Dorsolateral prefrontal cortex (tissue), 120 donors: ENCODE measurements at regions of chr17 and their contacts with region 1.

Region 1: DNA sequence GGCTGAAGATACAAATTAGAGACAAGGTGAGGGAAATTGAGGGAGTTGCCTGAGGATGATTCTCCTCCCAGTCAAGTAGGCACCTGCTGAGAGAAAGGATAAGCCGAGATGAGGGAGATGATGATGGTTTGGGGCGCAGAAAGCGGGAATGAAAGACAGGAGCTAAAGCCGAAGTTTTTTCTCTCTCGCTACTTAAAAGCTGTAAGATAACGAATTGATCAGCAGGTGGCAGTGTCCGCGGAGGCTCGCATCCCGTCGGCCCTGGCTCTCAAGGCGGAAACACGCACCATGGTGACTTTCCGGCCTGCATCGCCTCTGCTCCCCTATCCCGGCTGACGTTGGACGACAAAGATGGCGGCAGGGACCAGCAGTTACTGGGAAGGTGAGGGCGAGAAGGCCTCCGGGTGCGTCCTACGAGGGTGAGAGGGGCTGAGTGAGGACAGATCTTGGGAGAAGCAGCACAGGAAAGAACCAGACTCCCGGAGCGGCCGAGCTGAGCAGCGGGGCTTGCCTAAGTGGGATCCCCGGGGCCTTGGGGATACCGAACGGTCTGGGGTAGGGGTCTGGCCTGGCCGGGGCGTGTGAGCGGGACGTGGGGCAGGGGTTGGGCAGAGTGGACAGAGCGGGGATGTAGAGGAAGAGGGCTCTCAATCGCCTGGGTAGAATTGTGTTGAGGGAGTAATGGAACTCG is at the start of gene GOSR1:
- DNase-seq: peak; percentile 87 to 97 (median 95)
- H3K4me3 ChIP-seq: peak within 1 kb of the TSS; percentile 66 to 98 (median 89)
- H3K27ac ChIP-seq: peak within 1 kb of the TSS; percentile 64 to 98 (median 91)
- H3K27me3 ChIP-seq: no peaks in the 10 kb centered on the region
- CTCF ChIP-seq: peak; percentile 81 to 95 (median 90)
- total RNA-seq, gene GOSR1: 41.4 to 68.9 (median 57.7) TPM

Region 2: GRCh38 chr17:30104575-30105339 is 372.5 kb before region 1 on chr17:
- intact Hi-C with region 1: loop called in 1 of 2 experiments (anchors 10 kb)
- DNase-seq: peak; percentile 57 to 82 (median 74)
- H3K4me3 ChIP-seq: peak overlapping the region; percentile 19 to 75 (median 57)
- H3K27ac ChIP-seq: peak overlapping the region in 29 of 59 donors; percentile 0 to 80 (median 48)
- H3K27me3 ChIP-seq: no peaks in the 10 kb centered on the region
- CTCF ChIP-seq: peak in 55 of 56 donors; percentile 78 to 97 (median 89)

Region 3: DNA sequence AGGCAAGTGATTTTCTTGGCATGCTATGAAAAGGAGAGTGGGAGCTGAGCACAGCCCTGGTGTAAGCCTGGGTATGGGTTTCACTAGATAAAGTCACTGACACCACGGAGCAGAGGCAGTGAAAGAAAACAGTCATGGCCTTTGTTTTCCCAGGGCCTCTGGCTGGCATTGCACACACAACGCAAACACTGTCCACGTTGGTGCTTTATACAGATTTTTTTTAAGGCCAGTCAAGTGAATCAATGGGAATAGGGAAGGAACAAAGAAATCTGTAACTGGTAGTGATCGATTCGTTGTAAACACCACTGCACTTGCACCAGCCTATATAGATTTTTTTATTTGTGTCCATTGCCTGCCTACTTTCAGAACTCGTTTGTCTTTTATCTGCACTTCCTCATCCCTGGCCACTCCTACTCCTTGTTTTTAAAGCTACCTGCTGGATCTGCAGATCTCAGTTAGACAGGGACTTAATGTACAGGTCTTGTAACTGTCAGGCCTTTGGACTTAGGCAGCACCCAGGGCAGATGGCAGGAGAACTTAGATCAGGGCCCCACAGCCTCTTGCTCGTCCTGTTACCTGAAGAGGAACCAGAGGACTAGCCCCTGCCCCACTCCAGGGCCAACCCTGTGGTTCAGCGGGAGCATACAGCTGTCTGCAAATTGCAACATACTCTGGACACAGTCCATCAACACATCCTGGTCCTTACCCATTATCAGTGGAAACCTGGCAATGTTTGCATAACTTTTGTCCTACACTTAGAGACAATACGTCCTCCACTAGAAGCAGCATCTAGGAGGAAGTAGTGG is 132.7 kb before region 1 on chr17:
- intact Hi-C with region 1: loop called (anchors 1 to 2 kb)
- DNase-seq: peak in 9 of 10 donors; percentile 26 to 80 (median 56)
- H3K4me3 ChIP-seq: peak overlapping the region in 22 of 59 donors; percentile 7 to 38 (median 16)
- H3K27ac ChIP-seq: peak overlapping the region; percentile 21 to 98 (median 92)
- H3K27me3 ChIP-seq: no peaks in the 10 kb centered on the region
- CTCF ChIP-seq: peak in 13 of 56 donors; percentile 4 to 39 (median 17)

Region 4: GRCh38 chr17:30368912-30369720 is 108.1 kb before region 1 on chr17:
- intact Hi-C with region 1: no loop called
- DNase-seq: peak in 1 of 10 donors; percentile 43
- H3K4me3 ChIP-seq: peak overlapping the region in 6 of 59 donors; percentile 2 to 33 (median 18)
- H3K27ac ChIP-seq: peak overlapping the region in 43 of 59 donors; percentile 1 to 71 (median 37)
- H3K27me3 ChIP-seq: no peaks in the 10 kb centered on the region
- CTCF ChIP-seq: no peak

Region 5: DNA sequence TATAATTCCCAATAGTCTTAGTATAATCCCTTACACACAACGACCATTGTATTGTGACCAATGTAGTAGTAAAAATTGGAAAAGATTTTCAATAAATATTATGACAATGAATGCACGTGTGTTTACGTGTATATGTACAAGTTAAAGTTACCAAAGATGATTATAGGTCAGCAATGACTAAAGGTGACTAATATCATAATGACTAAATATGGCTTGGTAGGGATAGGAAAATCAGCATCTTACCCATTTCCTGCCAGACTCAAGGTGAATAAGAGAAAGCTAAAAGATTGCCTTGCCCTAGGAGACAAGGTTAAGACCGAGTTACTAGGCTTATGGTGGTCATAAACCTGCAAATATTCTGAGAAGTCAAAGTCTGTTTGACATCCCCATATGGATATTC is 64.1 kb before region 1 on chr17:
- intact Hi-C with region 1: no loop called
- DNase-seq: no peak
- H3K4me3 ChIP-seq: no peak overlapping the region
- H3K27ac ChIP-seq: no peak overlapping the region
- H3K27me3 ChIP-seq: no peaks in the 10 kb centered on the region
- CTCF ChIP-seq: no peak

Region 6: GRCh38 chr17:30443721-30444120 is 33.5 kb before region 1 on chr17:
- intact Hi-C with region 1: no loop called
- DNase-seq: no peak
- H3K4me3 ChIP-seq: no peak overlapping the region
- H3K27ac ChIP-seq: peak overlapping the region in 3 of 59 donors; percentile 1 to 29 (median 26)
- H3K27me3 ChIP-seq: no peaks in the 10 kb centered on the region
- CTCF ChIP-seq: no peak

Region 7: GRCh38 chr17:30600049-30600829 is 123.0 kb after region 1 on chr17:
- intact Hi-C with region 1: loop called in 1 of 2 experiments (anchors 10 kb)
- DNase-seq: peak; percentile 52 to 86 (median 70)
- H3K4me3 ChIP-seq: peak overlapping the region; percentile 54 to 95 (median 84)
- H3K27ac ChIP-seq: peak overlapping the region; percentile 4 to 98 (median 92)
- H3K27me3 ChIP-seq: no peaks in the 10 kb centered on the region
- CTCF ChIP-seq: peak in 41 of 56 donors; percentile 5 to 53 (median 33)

Region 8: GRCh38 chr17:30824356-30825145 is 347.3 kb after region 1 on chr17 and contains the start of gene CRLF3:
- intact Hi-C with region 1: loop called in 1 of 2 experiments (anchors 5 kb)
- DNase-seq: peak; percentile 74 to 95 (median 87)
- H3K4me3 ChIP-seq: peak within 1 kb of the TSS; percentile 62 to 99 (median 88)
- H3K27ac ChIP-seq: peak within 1 kb of the TSS in 53 of 59 donors; percentile 26 to 93 (median 80)
- H3K27me3 ChIP-seq: no peaks in the 10 kb centered on the region
- CTCF ChIP-seq: peak; percentile 10 to 91 (median 68)
- total RNA-seq, gene CRLF3: 5.6 to 17.2 (median 11.7) TPM